Activated T-helper 1 cell treated with anti-CD3 and anti-CD28 coated beads, Interleukin-12 subunit alpha, Interleukin-12 subunit beta, Interleukin-2, Interleukin-4 antibody, amounts not matched to agents 30 ng/mL and 10 ng/mL and 1 ng/mL, durations not matched to agents 14 hours and 24 hours and 36 hours (primary cell): ENCODE measurements at regions of chr1 and their contacts with region 1.

Region 1: DNA sequence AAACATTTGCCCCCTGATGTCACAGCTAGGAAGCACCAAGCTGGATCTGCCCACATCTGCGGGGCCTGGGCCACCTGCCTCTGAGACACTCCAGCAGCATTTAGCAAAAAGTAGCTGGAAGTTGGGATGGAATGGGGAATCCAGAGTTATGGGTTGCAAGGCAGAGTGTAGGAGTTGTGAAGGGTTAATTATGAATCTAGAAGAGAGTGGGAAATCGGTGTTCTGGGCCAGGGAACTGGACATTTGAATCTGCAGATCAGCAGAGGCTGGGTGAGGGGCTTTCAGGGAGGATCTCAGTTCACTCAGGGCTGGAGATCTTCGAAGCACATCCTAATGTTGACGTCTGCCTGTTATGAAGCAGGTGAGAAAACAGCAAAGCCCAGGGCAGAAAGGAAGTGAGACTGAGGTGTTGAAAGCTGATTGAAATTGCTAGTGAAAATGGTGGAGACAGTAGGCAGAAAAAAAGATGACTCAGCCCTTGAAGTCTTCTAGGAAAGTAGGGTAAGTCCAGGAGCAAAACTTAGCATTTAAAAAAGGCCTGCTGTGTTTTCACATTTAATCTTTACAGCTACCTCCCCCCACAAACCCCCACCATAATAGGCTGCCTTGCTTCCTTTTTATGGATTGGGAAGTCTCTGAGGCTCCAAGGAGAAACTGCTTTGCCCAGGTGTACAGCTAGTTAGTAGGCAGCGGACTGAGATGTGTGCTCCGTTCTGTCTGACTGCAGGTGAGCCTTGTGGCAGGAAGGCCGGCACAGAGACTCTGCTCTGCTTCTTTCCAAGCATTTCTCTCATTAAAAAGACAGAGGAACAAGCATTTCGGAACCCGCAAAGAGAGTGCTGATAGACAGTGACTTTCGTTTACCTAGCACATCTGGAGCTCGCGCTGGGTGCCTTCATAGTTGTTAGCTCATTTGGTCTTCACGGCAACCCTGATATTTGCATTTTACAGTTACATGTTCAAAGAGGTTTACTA is 7.2 kb downstream of the VANGL1 start:
- DNase-seq: peak; percentile 36
- H3K4me3 Mint-ChIP-seq: no peak overlapping the region
- H3K27ac Mint-ChIP-seq: no peak overlapping the region
- H3K4me1 Mint-ChIP-seq: peaks cover 6% of the 10 kb centered on the region
- H3K27me3 Mint-ChIP-seq: peaks cover 6% of the 10 kb centered on the region

Region 2: DNA sequence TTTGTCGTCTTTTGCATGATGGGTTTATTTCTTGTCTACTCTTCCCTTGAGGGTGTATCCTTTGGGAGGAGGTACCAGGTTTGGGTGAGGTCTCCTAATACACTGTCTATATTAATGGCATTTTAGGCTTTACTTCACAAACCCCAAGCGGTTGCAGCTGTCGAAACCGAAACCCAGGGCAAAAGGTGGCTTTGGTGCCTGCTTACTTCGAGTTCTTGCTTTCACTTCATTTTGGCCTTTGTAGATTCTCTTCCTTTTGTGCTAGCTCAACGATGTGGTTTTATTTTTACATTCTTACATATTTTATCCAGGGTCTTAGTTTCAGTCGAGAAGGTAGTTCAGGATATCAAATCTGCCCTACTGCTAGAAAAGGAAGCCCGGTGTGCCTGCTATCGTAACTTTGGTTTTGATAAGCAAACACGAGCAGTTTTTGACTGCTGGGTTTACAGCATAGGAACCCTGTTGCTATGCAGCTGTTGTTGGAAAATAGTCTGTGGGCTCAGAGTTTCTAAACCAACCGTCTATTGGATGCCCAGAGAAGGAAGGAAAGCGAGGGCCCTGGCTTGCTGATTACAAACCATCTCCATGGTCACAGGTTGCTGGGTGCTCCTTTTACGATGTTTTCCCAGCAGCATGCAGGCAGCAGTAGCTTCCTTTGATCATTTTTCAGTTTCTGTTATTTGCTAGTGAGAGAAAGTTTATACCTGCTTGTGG is 549.9 kb before region 1 on chr1:
- intact Hi-C with region 1: loop called (anchors 5 kb)
- DNase-seq: peak; percentile 70
- H3K4me3 Mint-ChIP-seq: peak overlapping the region; percentile 89
- H3K27ac Mint-ChIP-seq: peak overlapping the region; percentile 98
- H3K4me1 Mint-ChIP-seq: peaks cover 30% of the 10 kb centered on the region
- H3K27me3 Mint-ChIP-seq: peaks cover 16% of the 10 kb centered on the region

Region 3: DNA sequence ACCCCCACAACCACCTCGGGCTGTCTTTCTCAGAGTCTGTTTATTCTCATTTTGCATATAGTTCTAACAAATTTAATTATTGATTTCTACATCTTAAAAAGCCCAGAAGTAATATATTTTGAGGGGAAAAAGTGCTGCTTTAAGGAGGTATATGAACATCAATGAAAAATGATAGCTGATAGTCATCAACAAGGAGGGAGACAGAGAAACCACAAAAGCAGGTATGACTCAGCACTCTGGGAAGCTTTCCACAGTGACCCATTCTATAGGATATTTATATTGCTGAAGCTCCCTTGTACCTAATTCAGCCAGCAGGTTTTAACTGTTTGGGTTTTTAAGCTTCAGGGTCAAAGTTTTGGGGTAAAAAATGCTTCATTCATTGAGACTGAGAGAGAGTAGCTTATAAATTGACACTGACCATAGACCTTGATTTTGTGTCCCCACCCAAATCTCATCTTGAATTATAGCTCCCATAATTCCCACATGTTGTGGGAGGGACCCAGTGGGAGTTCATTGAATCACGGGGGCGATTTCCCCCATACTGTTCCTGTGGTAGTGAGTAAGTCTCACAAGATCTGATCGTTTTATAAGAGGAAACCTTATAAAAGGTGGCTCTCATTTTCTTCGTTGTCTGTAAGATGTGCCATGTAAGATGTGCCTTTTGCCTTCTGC is 20.1 kb after region 1 on chr1:
- intact Hi-C with region 1: loop called (anchors 1 kb)
- DNase-seq: no peak
- H3K4me3 Mint-ChIP-seq: no peak overlapping the region
- H3K27ac Mint-ChIP-seq: no peak overlapping the region
- H3K4me1 Mint-ChIP-seq: peaks cover 12% of the 10 kb centered on the region
- H3K27me3 Mint-ChIP-seq: no peaks in the 10 kb centered on the region

Region 4: GRCh38 chr1:116372587-116373444 is 723.8 kb after region 1 on chr1 and contains the start of gene ATP1A1:
- intact Hi-C with region 1: loop called (anchors 2 kb)
- DNase-seq: peak; percentile 95
- H3K4me3 Mint-ChIP-seq: peak within 1 kb of the TSS; percentile 95
- H3K27ac Mint-ChIP-seq: peak within 1 kb of the TSS; percentile 90
- H3K4me1 Mint-ChIP-seq: peaks cover 38% of the 10 kb centered on the region
- H3K27me3 Mint-ChIP-seq: peaks cover 12% of the 10 kb centered on the region
- total RNA-seq, gene ATP1A1: 238 and 240 TPM in 2 replicates